ENCODE measurements at regions of chr12 and their contacts with region 1.

Region 1: DNA sequence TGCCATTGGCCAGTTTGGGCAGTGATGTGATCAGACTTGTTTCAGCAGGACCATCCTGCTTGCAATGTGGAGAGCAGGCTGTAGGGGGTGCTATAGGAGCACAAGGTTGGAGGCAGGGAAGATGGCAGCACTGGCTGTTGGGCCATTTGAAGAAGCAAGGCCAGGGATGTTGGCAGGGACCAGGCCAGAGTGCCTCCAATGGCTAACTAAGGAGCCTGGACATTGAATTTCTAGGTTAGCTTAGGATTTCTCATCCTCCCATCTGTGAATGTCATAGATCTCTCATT is 23.5 kb downstream of the FGF23 start:
- DNase-seq: peak in 3 of 5 donors; percentile 17 to 40 (median 25)
- ATAC-seq: peak in 2 of 4 donors; percentile 12 to 50
- H3K4me3 ChIP-seq: no peak overlapping the region
- H3K27ac ChIP-seq: peak overlapping the region in 5 of 12 donors; percentile 11 to 64 (median 50)
- H3K4me1 ChIP-seq: peaks cover 0 to 10% (median 0%) of the 10 kb centered on the region in 12 donors
- H3K27me3 ChIP-seq: peaks cover 0 to 2% (median 0%) of the 10 kb centered on the region in 9 donors
- CTCF ChIP-seq: peak; percentile 17 to 51 (median 32)
- POLR2A ChIP-seq: no peak

Region 2: GRCh38 chr12:4421590-4422031 is 65.6 kb after region 1 on chr12:
- intact Hi-C with region 1: loop called in 1 of 10 experiments (anchors 5 kb)
- DNase-seq: no peak
- ATAC-seq: no peak
- H3K4me3 ChIP-seq: no peak overlapping the region
- H3K27ac ChIP-seq: no peak overlapping the region
- H3K4me1 ChIP-seq: peaks cover 0 to 16% (median 0%) of the 10 kb centered on the region in 12 donors
- H3K27me3 ChIP-seq: peaks cover 0 to 9% (median 0%) of the 10 kb centered on the region in 9 donors
- CTCF ChIP-seq: peak; percentile 39 to 78 (median 68)
- POLR2A ChIP-seq: no peak

Measured in heart left ventricle (tissue), 16 donors.